Activated naive CD4-positive, alpha-beta T cell treated with anti-CD3 and anti-CD28 coated beads for 36 hours (primary cell): ENCODE measurements at regions of chr3 and their contacts with region 1.

Region 1: GRCh38 chr3:11626084-11626463 is 17.6 kb downstream of the VGLL4 start:
- DNase-seq: peak; percentile 54
- H3K4me3 Mint-ChIP-seq: no peak overlapping the region
- H3K27ac Mint-ChIP-seq: no peak overlapping the region
- H3K4me1 Mint-ChIP-seq: peaks cover 60% of the 10 kb centered on the region
- H3K27me3 Mint-ChIP-seq: no peaks in the 10 kb centered on the region

Region 2: DNA sequence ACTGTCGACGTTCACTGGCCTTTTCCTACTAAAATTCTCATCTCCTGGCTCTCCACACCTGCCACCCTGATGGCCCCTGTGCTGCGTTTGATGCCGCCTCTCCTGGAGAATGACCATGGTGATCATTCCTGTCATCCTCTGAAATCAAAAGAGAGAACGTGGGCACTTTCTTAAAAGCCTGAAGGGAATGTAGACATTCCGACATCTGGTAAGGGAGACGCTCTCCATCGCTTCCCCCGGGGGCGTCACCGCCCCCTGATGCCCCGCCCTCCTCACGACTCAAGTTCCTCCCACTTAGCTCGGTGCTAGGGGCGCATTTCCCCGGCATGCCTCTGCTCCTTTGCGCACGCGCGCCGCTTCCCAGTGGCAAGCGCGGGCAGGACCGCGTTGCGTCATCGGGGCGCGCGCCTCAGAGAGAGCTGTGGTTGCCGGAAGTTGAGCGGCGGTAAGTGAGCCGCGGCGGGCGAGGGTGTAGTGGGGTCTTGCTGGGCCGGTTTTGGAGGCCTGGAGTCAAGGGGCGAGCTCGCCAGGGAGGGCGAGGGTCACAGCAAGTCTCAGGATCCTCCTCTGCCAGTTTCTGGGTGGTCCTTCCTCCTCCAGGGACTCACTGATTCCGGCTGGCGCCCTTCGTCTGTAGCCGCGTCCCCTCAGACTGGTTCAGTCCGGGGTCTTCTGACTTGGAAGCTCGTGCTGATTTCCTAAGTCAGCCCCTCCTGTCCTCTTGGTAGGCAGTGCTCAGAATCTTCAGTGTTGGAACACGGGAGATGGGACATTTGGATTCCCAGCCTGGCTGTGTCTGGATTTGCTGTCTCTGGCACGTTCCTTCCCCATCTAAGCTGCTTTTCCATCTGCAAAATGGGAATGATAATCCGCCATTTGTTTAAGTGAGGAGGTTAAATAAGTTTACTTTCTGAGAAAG is 353.8 kb before region 1 on chr3 and contains the start of gene ATG7:
- CTCF ChIA-PET with region 1: no interaction called
- intact Hi-C with region 1: loop called (anchors 1 kb)
- DNase-seq: peak; percentile 97
- H3K4me3 Mint-ChIP-seq: peak within 1 kb of the TSS; percentile 93
- H3K27ac Mint-ChIP-seq: peak within 1 kb of the TSS; percentile 93
- H3K4me1 Mint-ChIP-seq: peaks cover 43% of the 10 kb centered on the region
- H3K27me3 Mint-ChIP-seq: no peaks in the 10 kb centered on the region
- total RNA-seq, gene ATG7: 25.9 to 27.0 TPM

Region 3: GRCh38 chr3:11643605-11644087 is 17.6 kb after region 1 on chr3 and contains the start of gene VGLL4:
- CTCF ChIA-PET with region 1: interaction called, 7 read pairs
- intact Hi-C with region 1: loop called (anchors 1 kb)
- DNase-seq: peak; percentile 72
- H3K4me3 Mint-ChIP-seq: peak within 1 kb of the TSS; percentile 98
- H3K27ac Mint-ChIP-seq: peak within 1 kb of the TSS; percentile 89
- H3K4me1 Mint-ChIP-seq: peaks cover 33% of the 10 kb centered on the region
- H3K27me3 Mint-ChIP-seq: no peaks in the 10 kb centered on the region
- total RNA-seq, gene VGLL4: 6.3 to 7.7 TPM

Region 4: GRCh38 chr3:11770477-11771391 is 144.7 kb after region 1 on chr3:
- CTCF ChIA-PET with region 1: no interaction called
- intact Hi-C with region 1: loop called (anchors 1 kb)
- DNase-seq: peak; percentile 91
- H3K4me3 Mint-ChIP-seq: peak overlapping the region; percentile 10
- H3K27ac Mint-ChIP-seq: peak overlapping the region; percentile 71
- H3K4me1 Mint-ChIP-seq: peaks cover 18% of the 10 kb centered on the region
- H3K27me3 Mint-ChIP-seq: no peaks in the 10 kb centered on the region

Region 5: DNA sequence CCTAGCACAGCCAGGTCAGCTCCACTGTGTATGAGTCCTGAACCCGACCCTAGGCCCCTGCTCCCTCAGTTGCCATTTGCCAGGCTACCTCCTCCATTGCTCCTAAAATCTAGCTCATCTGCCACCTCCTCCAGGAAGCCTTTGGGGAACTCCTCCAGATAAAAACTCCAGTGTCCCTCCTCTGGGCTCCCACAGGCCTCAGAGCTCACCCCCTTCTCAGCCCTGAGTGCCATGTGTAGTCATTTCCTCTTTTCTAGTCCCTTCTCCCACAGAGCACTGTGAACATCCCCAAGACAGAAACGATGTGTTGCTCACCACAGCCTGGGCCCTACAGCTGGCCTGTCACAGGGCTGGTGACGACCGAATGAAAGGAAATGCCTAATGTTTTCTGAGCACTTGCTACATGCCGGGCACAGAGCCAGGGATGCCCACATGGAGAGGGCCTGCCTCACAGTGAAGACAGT is 1386.2 kb after region 1 on chr3:
- CTCF ChIA-PET with region 1: no interaction called
- intact Hi-C with region 1: loop called (anchors 10 kb)
- DNase-seq: peak; percentile 88
- H3K4me3 Mint-ChIP-seq: peak overlapping the region; percentile 65
- H3K27ac Mint-ChIP-seq: peak overlapping the region; percentile 97
- H3K4me1 Mint-ChIP-seq: peaks cover 80% of the 10 kb centered on the region
- H3K27me3 Mint-ChIP-seq: no peaks in the 10 kb centered on the region